ENCODE measurements at regions of chr6 and their contacts with region 1.

Region 1: GRCh38 chr6:75472885-75473284 is 20.7 kb downstream of the FILIP1 start:
- DNase-seq: no peak
- ATAC-seq: no peak
- H3K4me3 ChIP-seq: no peak overlapping the region
- H3K27ac ChIP-seq: no peak overlapping the region
- H3K4me1 ChIP-seq: peaks cover 0 to 76% (median 11%) of the 10 kb centered on the region in 9 donors
- H3K27me3 ChIP-seq: no peaks in the 10 kb centered on the region
- CTCF ChIP-seq: no peak

Region 2: DNA sequence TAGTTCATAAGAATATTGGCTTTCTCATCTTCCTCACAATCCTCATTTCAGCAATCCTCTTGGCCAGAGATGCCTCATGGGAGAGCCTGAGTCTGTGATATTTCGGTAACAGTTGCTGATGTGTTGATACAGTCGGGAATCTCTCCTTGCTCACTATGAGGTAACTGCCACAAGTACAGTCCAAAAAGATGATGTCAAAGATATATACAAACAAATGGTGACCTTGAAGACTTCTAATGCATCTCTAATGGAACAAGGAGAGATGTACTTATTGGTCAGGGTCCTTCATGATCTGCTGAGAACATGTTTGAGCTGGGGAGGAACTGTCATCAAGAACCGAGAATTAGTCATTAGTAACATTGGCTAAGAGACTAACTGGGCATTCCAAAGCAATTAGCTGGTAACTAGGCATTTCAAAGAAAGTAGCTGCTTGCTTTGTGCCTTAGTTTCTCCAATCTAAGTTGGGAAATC is 35.4 kb before region 1 on chr6:
- intact Hi-C with region 1: loop called in 1 of 10 experiments (anchors 5 kb)
- DNase-seq: peak in 1 of 2 donors; percentile 22
- ATAC-seq: peak; percentile 60 to 84 (median 76)
- H3K4me3 ChIP-seq: no peak overlapping the region
- H3K27ac ChIP-seq: peak overlapping the region; percentile 52 to 78 (median 68)
- H3K4me1 ChIP-seq: peaks cover 21 to 69% (median 38%) of the 10 kb centered on the region in 9 donors
- H3K27me3 ChIP-seq: no peaks in the 10 kb centered on the region
- CTCF ChIP-seq: no peak

Region 3: GRCh38 chr6:75504465-75505228 is 31.8 kb after region 1 on chr6:
- intact Hi-C with region 1: no loop called
- DNase-seq: peak in 1 of 2 donors; percentile 25
- ATAC-seq: peak; percentile 71 to 90 (median 84)
- H3K4me3 ChIP-seq: no peak overlapping the region
- H3K27ac ChIP-seq: no peak overlapping the region
- H3K4me1 ChIP-seq: peaks cover 0 to 39% (median 3%) of the 10 kb centered on the region in 9 donors
- H3K27me3 ChIP-seq: no peaks in the 10 kb centered on the region
- CTCF ChIP-seq: peak in 8 of 9 donors; percentile 24 to 74 (median 53)